MCF 10A (cell line): ENCODE measurements at regions of chr7 and their contacts with region 1.

Region 1: GRCh38 chr7:80346704-80347103 is 165.2 kb downstream of the GNAT3 start:
- DNase-seq: peak; percentile 96
- H3K4me3 Mint-ChIP-seq: peak overlapping the region; percentile 36
- H3K27ac Mint-ChIP-seq: peak overlapping the region; percentile 44
- H3K4me1 Mint-ChIP-seq: peaks cover 27% of the 10 kb centered on the region
- H3K27me3 Mint-ChIP-seq: no peaks in the 10 kb centered on the region
- CTCF ChIP-seq: no peak

Region 2: DNA sequence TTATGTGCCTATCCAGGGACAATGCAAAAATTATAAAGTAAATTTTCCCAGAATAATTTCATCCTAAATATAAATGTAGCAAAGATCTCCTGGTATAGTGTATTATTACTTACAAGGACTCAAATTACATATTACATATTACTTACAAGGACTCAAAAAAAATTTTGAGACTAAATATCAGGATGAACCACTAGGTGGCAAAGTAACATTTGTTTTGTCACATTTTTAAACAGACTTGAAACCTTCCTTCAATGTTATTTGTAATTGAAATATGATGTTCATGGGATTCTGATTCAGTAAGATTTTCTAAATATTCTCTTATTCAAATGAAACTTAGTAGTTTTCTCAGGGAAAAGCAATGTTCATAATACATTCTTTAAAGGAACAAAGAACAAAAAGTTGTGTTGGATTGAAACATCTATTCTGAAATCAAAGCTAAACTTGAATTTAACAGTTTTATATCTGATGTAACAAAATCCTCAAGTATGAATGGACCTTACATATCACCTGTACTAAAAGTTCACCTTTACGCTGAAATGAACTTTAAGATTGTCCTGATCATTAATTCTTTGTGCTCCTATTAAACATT is 286.4 kb before region 1 on chr7:
- CTCF ChIA-PET with region 1: no interaction called
- POLR2A ChIA-PET with region 1: no interaction called
- intact Hi-C with region 1: no loop called
- DNase-seq: peak; percentile 61
- H3K4me3 Mint-ChIP-seq: no peak overlapping the region
- H3K27ac Mint-ChIP-seq: no peak overlapping the region
- H3K4me1 Mint-ChIP-seq: no peaks in the 10 kb centered on the region
- H3K27me3 Mint-ChIP-seq: no peaks in the 10 kb centered on the region
- CTCF ChIP-seq: peak; percentile 46

Region 3: GRCh38 chr7:80312139-80312661 is 34.5 kb before region 1 on chr7:
- CTCF ChIA-PET with region 1: no interaction called
- POLR2A ChIA-PET with region 1: interaction called, 4 read pairs
- intact Hi-C with region 1: loop called (anchors 1 kb)
- DNase-seq: peak; percentile 84
- H3K4me3 Mint-ChIP-seq: no peak overlapping the region
- H3K27ac Mint-ChIP-seq: peak overlapping the region; percentile 94
- H3K4me1 Mint-ChIP-seq: peaks cover 11% of the 10 kb centered on the region
- H3K27me3 Mint-ChIP-seq: no peaks in the 10 kb centered on the region
- CTCF ChIP-seq: no peak

Region 4: DNA sequence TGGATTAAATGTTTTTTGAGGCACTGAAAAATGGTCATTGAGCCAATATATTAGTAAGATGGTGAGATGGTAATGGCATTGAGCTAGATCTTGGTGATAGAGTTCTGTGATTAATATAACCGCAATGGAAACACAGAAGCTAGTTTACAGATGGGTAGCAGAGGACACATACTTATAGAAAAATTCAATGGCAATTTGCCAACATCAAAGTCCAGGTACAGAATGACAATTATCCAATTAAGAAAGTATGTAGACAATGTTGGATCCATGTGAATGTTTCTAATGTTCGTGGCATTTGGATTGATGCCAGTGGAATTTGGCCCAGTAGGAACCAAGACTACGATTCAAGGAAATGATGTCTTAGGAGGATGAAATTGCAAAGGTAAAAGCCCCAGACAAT is 22.7 kb before region 1 on chr7:
- CTCF ChIA-PET with region 1: interaction called, 3 read pairs
- POLR2A ChIA-PET with region 1: interaction called, 3 read pairs
- intact Hi-C with region 1: loop called (anchors 1 kb)
- DNase-seq: peak; percentile 52
- H3K4me3 Mint-ChIP-seq: no peak overlapping the region
- H3K27ac Mint-ChIP-seq: peak overlapping the region; percentile 18
- H3K4me1 Mint-ChIP-seq: peaks cover 10% of the 10 kb centered on the region
- H3K27me3 Mint-ChIP-seq: no peaks in the 10 kb centered on the region
- CTCF ChIP-seq: no peak

Region 5: DNA sequence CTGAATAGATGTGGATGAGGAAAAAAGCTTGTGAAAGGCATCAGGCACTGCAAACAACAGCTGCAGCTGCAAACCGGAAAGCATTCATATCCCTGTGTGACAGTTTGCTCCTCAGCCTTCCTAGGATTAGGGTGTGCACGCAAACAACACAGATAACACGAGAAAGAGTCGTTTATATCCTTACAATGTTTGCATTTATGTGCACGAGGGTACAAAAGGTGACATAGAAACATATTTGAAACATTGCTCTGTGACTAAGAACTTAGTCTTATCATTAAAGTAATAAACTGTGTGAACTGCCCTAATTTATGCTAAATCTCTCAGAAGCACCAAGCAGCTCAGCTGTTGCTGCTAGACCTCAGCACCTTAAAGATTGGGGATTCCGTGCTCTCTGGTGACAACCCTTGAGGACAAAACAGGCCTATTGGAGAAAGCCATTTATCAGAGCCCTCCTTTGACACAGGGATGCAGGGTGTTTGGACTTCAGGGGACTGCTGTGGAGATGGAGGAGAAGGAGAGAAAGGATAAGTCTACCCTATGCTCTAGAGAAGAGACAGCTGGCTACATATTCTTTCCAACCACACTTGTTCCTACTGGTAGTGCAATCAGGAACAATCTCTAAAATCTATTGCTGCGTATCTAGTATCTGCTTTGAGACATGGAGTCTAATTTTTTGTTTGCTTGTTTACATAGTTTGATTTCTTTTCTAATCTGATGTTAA is 11.0 kb before region 1 on chr7:
- CTCF ChIA-PET with region 1: interaction called, 3 read pairs
- POLR2A ChIA-PET with region 1: interaction called, 12 read pairs
- intact Hi-C with region 1: no loop called
- DNase-seq: no peak
- H3K4me3 Mint-ChIP-seq: no peak overlapping the region
- H3K27ac Mint-ChIP-seq: no peak overlapping the region
- H3K4me1 Mint-ChIP-seq: no peaks in the 10 kb centered on the region
- H3K27me3 Mint-ChIP-seq: no peaks in the 10 kb centered on the region
- CTCF ChIP-seq: no peak

Region 6: GRCh38 chr7:80379034-80379982 is 32.6 kb after region 1 on chr7:
- CTCF ChIA-PET with region 1: no interaction called
- POLR2A ChIA-PET with region 1: interaction called, 10 read pairs
- intact Hi-C with region 1: no loop called
- DNase-seq: peak; percentile 30
- H3K4me3 Mint-ChIP-seq: no peak overlapping the region
- H3K27ac Mint-ChIP-seq: no peak overlapping the region
- H3K4me1 Mint-ChIP-seq: no peaks in the 10 kb centered on the region
- H3K27me3 Mint-ChIP-seq: no peaks in the 10 kb centered on the region
- CTCF ChIP-seq: no peak

Region 7: GRCh38 chr7:80478683-80479082 is 132.0 kb after region 1 on chr7:
- CTCF ChIA-PET with region 1: no interaction called
- POLR2A ChIA-PET with region 1: no interaction called
- intact Hi-C with region 1: no loop called
- DNase-seq: peak; percentile 31
- H3K4me3 Mint-ChIP-seq: no peak overlapping the region
- H3K27ac Mint-ChIP-seq: no peak overlapping the region
- H3K4me1 Mint-ChIP-seq: peaks cover 20% of the 10 kb centered on the region
- H3K27me3 Mint-ChIP-seq: no peaks in the 10 kb centered on the region
- CTCF ChIP-seq: no peak